ENCODE measurements at regions of chr1 and their contacts with region 1.

Region 1: DNA sequence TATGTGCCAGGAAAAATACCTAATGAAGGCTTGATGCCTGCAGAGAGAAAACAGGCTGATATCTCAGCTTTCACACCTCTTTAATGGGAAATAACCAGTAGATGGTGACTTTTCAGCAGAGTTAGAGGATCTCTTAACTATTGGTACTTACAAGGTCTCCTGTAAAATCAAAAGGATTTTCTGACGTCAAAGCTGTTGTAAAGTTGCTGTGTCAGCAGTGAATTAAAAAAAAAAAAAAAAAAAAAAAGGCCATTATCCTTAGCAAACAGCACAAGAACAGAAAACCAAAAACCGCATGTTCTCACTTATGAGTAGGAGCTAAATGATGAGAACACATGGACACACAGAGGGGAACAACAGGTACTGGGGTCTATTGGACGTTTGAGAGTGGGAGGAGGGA is 349.1 kb downstream of the AMY1C start:
- DNase-seq: no peak
- ATAC-seq: no peak
- H3K4me3 ChIP-seq: no peak overlapping the region
- H3K4me3 Mint-ChIP-seq: no peak overlapping the region
- H3K27ac ChIP-seq: no peak overlapping the region
- H3K27ac Mint-ChIP-seq: no peak overlapping the region
- H3K4me1 ChIP-seq: no peaks in the 10 kb centered on the region
- H3K4me1 Mint-ChIP-seq: no peaks in the 10 kb centered on the region
- H3K27me3 ChIP-seq: no peaks in the 10 kb centered on the region
- H3K27me3 Mint-ChIP-seq: no peaks in the 10 kb centered on the region
- CTCF ChIP-seq: no peak

Region 2: GRCh38 chr1:104082221-104082620 is 16.6 kb before region 1 on chr1:
- CTCF ChIA-PET with region 1: no interaction called
- POLR2A ChIA-PET with region 1: no interaction called
- intact Hi-C with region 1: no loop called
- DNase-seq: no peak
- ATAC-seq: no peak
- H3K4me3 ChIP-seq: no peak overlapping the region
- H3K4me3 Mint-ChIP-seq: no peak overlapping the region
- H3K27ac ChIP-seq: no peak overlapping the region
- H3K27ac Mint-ChIP-seq: no peak overlapping the region
- H3K4me1 ChIP-seq: no peaks in the 10 kb centered on the region
- H3K4me1 Mint-ChIP-seq: no peaks in the 10 kb centered on the region
- H3K27me3 ChIP-seq: no peaks in the 10 kb centered on the region
- H3K27me3 Mint-ChIP-seq: no peaks in the 10 kb centered on the region
- CTCF ChIP-seq: no peak

Region 3: DNA sequence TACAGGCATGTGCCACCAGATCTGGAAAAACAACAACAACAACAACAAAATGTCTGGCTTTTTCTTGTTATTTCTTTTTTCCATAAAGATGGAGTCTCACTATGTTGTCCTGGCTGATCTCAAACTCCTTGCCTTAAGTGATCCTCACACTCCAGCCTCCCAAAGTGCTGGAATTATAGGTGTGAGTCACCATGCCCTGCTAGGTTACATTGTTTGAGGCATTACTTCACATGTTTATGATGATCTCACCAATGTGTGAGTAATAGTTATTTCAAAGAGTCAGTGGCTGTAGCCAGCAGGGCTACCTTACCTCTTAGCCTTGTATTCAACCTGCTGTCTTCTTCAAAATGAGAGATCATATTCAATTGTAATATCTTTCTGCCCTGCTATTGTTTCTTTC is 96.6 kb after region 1 on chr1:
- CTCF ChIA-PET with region 1: no interaction called
- POLR2A ChIA-PET with region 1: no interaction called
- intact Hi-C with region 1: loop called in 1 of 2 experiments (anchors 5 kb)
- DNase-seq: no peak
- ATAC-seq: no peak
- H3K4me3 ChIP-seq: no peak overlapping the region
- H3K4me3 Mint-ChIP-seq: no peak overlapping the region
- H3K27ac ChIP-seq: no peak overlapping the region
- H3K27ac Mint-ChIP-seq: no peak overlapping the region
- H3K4me1 ChIP-seq: no peaks in the 10 kb centered on the region
- H3K4me1 Mint-ChIP-seq: no peaks in the 10 kb centered on the region
- H3K27me3 ChIP-seq: no peaks in the 10 kb centered on the region
- H3K27me3 Mint-ChIP-seq: no peaks in the 10 kb centered on the region
- CTCF ChIP-seq: no peak